ENCODE measurements at regions of chr18 and their contacts with region 1.

Region 1: DNA sequence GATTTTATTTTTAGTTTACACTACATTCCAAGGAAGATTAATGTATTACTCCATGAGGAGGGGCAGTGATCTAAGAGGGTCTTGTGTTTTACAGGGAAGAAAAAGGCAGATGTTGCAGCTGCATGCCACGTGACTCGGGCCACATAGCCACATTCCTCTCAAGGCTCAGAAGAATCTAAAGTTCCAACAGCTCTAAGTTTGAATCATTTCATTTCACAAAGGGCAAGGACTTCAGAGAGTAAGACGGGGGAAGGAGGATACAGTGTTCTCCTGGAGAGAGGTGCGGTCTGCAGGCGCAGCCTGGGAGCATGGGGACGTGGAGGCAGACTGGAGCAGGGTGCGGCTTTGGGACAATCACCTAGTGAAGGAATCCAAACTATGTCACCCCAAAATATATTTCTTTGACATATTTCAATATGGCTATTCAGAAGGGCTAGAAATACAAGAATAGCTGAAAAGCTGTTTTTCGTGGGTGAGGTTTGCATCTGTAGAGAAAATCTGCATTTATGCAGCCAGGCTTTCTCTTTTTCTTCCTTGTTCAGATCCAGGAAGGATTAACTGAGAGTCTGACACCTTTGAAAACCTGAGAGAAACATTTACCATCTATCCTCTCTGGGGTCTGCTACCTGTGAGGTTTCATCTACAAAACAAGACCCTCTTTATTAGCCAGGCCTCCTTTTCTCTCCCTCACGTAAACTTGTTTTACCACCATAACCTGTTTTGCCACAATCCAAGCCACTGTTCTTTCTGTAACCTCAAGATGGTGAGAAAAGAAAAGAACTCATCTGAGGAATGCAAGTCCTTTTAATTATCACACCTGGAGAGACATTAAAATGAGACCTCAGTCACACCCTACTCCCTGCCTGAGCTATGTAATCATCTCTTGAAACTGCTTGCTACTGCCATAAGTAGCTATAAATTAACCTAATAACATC is 165.1 kb upstream of the NDUFV2 start:
- DNase-seq: peak; percentile 59 to 94
- H3K4me3 ChIP-seq: no peak overlapping the region; the same call in 1 of the 2 replicates
- H3K27ac ChIP-seq: peak overlapping the region; percentile 57
- H3K4me1 ChIP-seq: peaks cover 36% of the 10 kb centered on the region
- H3K27me3 ChIP-seq: no peaks in the 10 kb centered on the region
- CTCF ChIP-seq: no peak

Region 2: GRCh38 chr18:7259475-7260081 is 1677.8 kb before region 1 on chr18:
- CTCF ChIA-PET with region 1: no interaction called
- POLR2A ChIA-PET with region 1: no interaction called
- intact Hi-C with region 1: no loop called
- DNase-seq: no peak
- H3K4me3 ChIP-seq: no peak overlapping the region
- H3K27ac ChIP-seq: no peak overlapping the region
- H3K4me1 ChIP-seq: no peaks in the 10 kb centered on the region
- H3K27me3 ChIP-seq: peaks cover 45% of the 10 kb centered on the region
- CTCF ChIP-seq: no peak

Region 3: GRCh38 chr18:7872569-7872968 is 1064.9 kb before region 1 on chr18:
- CTCF ChIA-PET with region 1: no interaction called
- POLR2A ChIA-PET with region 1: no interaction called
- intact Hi-C with region 1: no loop called
- DNase-seq: peak; percentile 17 to 84
- H3K4me3 ChIP-seq: no peak overlapping the region; the same call in 1 of the 2 replicates
- H3K27ac ChIP-seq: peak overlapping the region; percentile 89
- H3K4me1 ChIP-seq: peaks cover 47% of the 10 kb centered on the region
- H3K27me3 ChIP-seq: no peaks in the 10 kb centered on the region
- CTCF ChIP-seq: no peak; the same call in 1 of the 2 replicates

Region 4: GRCh38 chr18:8890957-8891464 is 46.4 kb before region 1 on chr18:
- CTCF ChIA-PET with region 1: no interaction called
- POLR2A ChIA-PET with region 1: no interaction called
- intact Hi-C with region 1: loop called (anchors 2 kb)
- DNase-seq: peak; percentile 79 to 99
- H3K4me3 ChIP-seq: no peak overlapping the region
- H3K27ac ChIP-seq: peak overlapping the region; percentile 51
- H3K4me1 ChIP-seq: peaks cover 17% of the 10 kb centered on the region
- H3K27me3 ChIP-seq: no peaks in the 10 kb centered on the region
- CTCF ChIP-seq: no peak

Region 5: GRCh38 chr18:8948471-8949149 is 11.2 kb after region 1 on chr18:
- CTCF ChIA-PET with region 1: interaction called, 5 read pairs
- POLR2A ChIA-PET with region 1: no interaction called
- intact Hi-C with region 1: loop called (anchors 1 kb)
- DNase-seq: peak; percentile 54 to 80
- H3K4me3 ChIP-seq: no peak overlapping the region
- H3K27ac ChIP-seq: peak overlapping the region; percentile 20; the same call in 1 of the 2 replicates
- H3K4me1 ChIP-seq: peaks cover 53% of the 10 kb centered on the region
- H3K27me3 ChIP-seq: no peaks in the 10 kb centered on the region
- CTCF ChIP-seq: no peak

Region 6: GRCh38 chr18:9233771-9234440 is 296.5 kb after region 1 on chr18:
- CTCF ChIA-PET with region 1: no interaction called
- POLR2A ChIA-PET with region 1: no interaction called
- intact Hi-C with region 1: no loop called
- DNase-seq: no peak
- H3K4me3 ChIP-seq: no peak overlapping the region
- H3K27ac ChIP-seq: no peak overlapping the region
- H3K4me1 ChIP-seq: no peaks in the 10 kb centered on the region
- H3K27me3 ChIP-seq: no peaks in the 10 kb centered on the region
- CTCF ChIP-seq: no peak

Measured in PC-9 (cell line).